Right cardiac atrium (tissue), 5 donors: ENCODE measurements at regions of chr16 and their contacts with region 1.

Region 1: GRCh38 chr16:61581417-61582046 is 454.7 kb downstream of the CDH8 start:
- DNase-seq: peak in 2 of 3 donors; percentile 20 to 24
- ATAC-seq: no peak
- H3K4me3 ChIP-seq: no peak overlapping the region
- H3K27ac ChIP-seq: no peak overlapping the region
- H3K4me1 ChIP-seq: no peaks in the 10 kb centered on the region
- H3K27me3 ChIP-seq: no peaks in the 10 kb centered on the region

Region 2: GRCh38 chr16:61644736-61645135 is 63.2 kb after region 1 on chr16:
- intact Hi-C with region 1: loop called in 1 of 4 experiments (anchors 10 kb)
- DNase-seq: no peak
- ATAC-seq: no peak
- H3K4me3 ChIP-seq: no peak overlapping the region
- H3K27ac ChIP-seq: no peak overlapping the region
- H3K4me1 ChIP-seq: no peaks in the 10 kb centered on the region
- H3K27me3 ChIP-seq: no peaks in the 10 kb centered on the region